ENCODE measurements at regions of chr2 and their contacts with region 1.

Region 1: DNA sequence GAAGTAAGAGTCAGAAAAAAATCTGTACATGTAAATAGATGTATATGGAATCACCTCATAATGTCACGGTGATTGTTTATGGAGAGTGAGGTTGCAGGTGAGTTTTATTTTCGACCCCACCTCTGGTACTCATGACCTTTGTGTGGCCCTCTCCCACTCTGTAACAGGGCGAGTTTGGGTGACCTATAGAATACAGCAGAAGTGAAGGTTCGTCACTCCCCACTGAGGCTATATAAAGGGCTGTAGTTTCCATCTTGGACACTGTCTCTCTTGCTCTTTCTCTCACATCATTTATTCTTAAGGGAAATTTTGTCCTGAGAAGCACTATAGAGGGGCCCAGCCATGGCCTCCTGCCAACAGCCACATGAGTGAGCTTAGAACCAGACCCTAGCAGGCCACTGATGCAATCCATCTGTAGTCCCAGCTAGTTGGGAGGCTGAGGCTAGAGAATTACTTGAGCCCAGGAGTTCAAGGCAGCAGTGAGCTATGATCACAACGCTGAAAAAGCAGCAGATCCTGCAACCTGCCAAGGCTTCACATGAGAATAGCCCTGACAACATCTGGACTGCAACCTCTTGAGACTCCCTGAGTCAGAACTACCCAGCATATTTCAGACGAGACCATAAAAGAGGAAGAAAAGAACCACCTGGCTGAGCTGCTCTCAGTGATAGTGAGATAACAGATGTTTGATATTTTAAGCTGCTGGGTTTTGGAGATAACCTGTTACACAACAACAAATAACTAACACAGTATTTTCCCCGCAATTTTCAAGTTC is 74.3 kb upstream of the SLC1A4 start:
- DNase-seq: no peak
- ATAC-seq: peak in 3 of 8 donors; percentile 29 to 48 (median 36)
- H3K4me3 ChIP-seq: no peak overlapping the region
- H3K27ac ChIP-seq: no peak overlapping the region
- H3K4me1 ChIP-seq: peaks cover 0 to 12% (median 5%) of the 10 kb centered on the region in 9 donors
- H3K27me3 ChIP-seq: no peaks in the 10 kb centered on the region
- CTCF ChIP-seq: no peak

Region 2: GRCh38 chr2:64819774-64820696 is 94.9 kb before region 1 on chr2:
- intact Hi-C with region 1: no loop called
- DNase-seq: no peak
- ATAC-seq: peak in 1 of 8 donors; percentile 44
- H3K4me3 ChIP-seq: no peak overlapping the region
- H3K27ac ChIP-seq: peak overlapping the region in 4 of 10 donors; percentile 3 to 81 (median 20)
- H3K4me1 ChIP-seq: peaks cover 0 to 17% (median 0%) of the 10 kb centered on the region in 9 donors
- H3K27me3 ChIP-seq: peaks cover 0 to 6% (median 0%) of the 10 kb centered on the region in 7 donors
- CTCF ChIP-seq: no peak

Region 3: GRCh38 chr2:65031341-65032018 is 116.6 kb after region 1 on chr2:
- intact Hi-C with region 1: loop called in 1 of 10 experiments (anchors 2 kb)
- DNase-seq: no peak
- ATAC-seq: peak in 2 of 8 donors; percentile 18 to 19
- H3K4me3 ChIP-seq: no peak overlapping the region
- H3K27ac ChIP-seq: no peak overlapping the region
- H3K4me1 ChIP-seq: peaks cover 0 to 42% (median 17%) of the 10 kb centered on the region in 9 donors
- H3K27me3 ChIP-seq: no peaks in the 10 kb centered on the region
- CTCF ChIP-seq: no peak

Region 4: GRCh38 chr2:65045651-65046050 is 130.7 kb after region 1 on chr2:
- intact Hi-C with region 1: loop called (anchors 1 to 5 kb)
- DNase-seq: no peak
- ATAC-seq: no peak
- H3K4me3 ChIP-seq: no peak overlapping the region
- H3K27ac ChIP-seq: no peak overlapping the region
- H3K4me1 ChIP-seq: peaks cover 0 to 28% (median 9%) of the 10 kb centered on the region in 9 donors
- H3K27me3 ChIP-seq: no peaks in the 10 kb centered on the region
- CTCF ChIP-seq: no peak

Region 5: GRCh38 chr2:65177751-65178442 is 263.0 kb after region 1 on chr2:
- intact Hi-C with region 1: loop called in 5 of 10 experiments (anchors 5 to 10 kb)
- DNase-seq: no peak
- ATAC-seq: no peak
- H3K4me3 ChIP-seq: no peak overlapping the region
- H3K27ac ChIP-seq: no peak overlapping the region
- H3K4me1 ChIP-seq: no peaks in the 10 kb centered on the region
- H3K27me3 ChIP-seq: no peaks in the 10 kb centered on the region
- CTCF ChIP-seq: no peak

Region 6: DNA sequence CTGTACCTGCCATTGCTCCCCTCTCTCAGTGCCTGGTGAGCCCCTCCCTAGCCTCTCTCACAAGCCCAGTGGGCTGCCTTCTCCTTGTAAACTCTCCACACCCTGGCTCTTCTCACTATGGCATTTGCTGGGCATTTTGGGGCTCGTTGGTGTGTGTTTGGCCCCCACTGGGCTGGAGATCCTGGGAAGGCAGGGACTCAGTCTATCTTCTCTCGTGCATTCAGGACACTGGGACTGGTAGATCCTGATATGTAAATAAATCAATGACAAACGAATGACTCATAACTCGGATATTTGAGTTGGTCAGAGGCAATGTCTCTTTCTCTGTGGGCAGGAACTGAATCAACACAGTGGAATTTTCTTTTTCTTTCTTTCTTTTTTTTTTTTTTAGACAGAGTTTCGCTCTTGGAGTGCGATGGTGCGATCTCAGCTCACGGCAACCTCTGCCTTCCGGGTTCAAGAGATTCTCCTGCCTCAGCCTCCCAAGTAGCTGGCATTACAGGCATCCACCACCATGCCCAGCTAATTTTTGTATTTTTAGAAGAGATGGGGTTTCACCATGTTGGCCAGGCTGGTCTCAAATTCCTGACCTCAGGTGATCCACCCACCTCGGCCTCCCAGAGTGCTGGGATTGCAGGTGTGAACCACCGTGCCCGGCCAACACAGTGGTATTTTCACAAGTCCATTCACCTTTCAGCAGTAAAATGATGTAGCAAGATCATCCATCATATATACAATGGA is 662.1 kb after region 1 on chr2:
- intact Hi-C with region 1: loop called in 6 of 10 experiments (anchors 10 kb)
- DNase-seq: no peak
- ATAC-seq: no peak
- H3K4me3 ChIP-seq: no peak overlapping the region
- H3K27ac ChIP-seq: peak overlapping the region in 1 of 10 donors; percentile 16
- H3K4me1 ChIP-seq: peaks cover 0 to 30% (median 12%) of the 10 kb centered on the region in 9 donors
- H3K27me3 ChIP-seq: peaks cover 0 to 4% (median 0%) of the 10 kb centered on the region in 7 donors
- CTCF ChIP-seq: no peak

Measured in heart right ventricle (tissue), 16 donors.